ENCODE measurements at regions of chr2 and their contacts with region 1.

Region 1: GRCh38 chr2:208175069-208175839 is 11.9 kb upstream of the CRYGA start:
- DNase-seq: peak; percentile 7 to 59 (median 45)
- ATAC-seq: peak; percentile 93
- H3K4me3 ChIP-seq: no peak overlapping the region
- H3K4me3 Mint-ChIP-seq: no peak overlapping the region
- H3K27ac ChIP-seq: no peak overlapping the region
- H3K27ac Mint-ChIP-seq: no peak overlapping the region
- H3K4me1 ChIP-seq: no peaks in the 10 kb centered on the region
- H3K4me1 Mint-ChIP-seq: peaks cover 0 to 6% (median 4%) of the 10 kb centered on the region in 7 donors
- H3K27me3 ChIP-seq: no peaks in the 10 kb centered on the region
- H3K27me3 Mint-ChIP-seq: peaks cover 2 to 20% (median 11%) of the 10 kb centered on the region in 5 donors

Region 2: DNA sequence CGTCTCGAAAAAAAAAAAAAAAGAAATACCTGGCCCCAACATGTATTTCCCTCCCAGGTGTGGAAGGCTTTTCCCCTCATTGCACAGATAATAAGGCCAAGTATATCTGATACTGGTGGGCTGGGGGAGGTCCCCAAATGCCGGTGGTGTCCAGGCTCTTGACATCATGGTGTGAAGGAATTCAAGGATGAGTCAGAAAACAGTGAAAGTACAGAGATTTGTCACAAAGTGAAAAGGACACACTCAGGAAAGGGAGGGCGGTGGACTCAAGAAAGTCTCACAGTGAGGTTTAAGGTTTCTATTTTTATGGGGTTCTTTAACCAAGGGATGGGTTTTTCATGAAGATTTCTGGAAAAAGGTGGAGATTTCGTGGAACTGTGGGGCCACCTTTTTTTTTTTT is 367.7 kb before region 1 on chr2:
- CTCF ChIA-PET with region 1: no interaction called
- POLR2A ChIA-PET with region 1: no interaction called
- intact Hi-C with region 1: no loop called
- DNase-seq: no peak
- ATAC-seq: no peak
- H3K4me3 ChIP-seq: no peak overlapping the region
- H3K4me3 Mint-ChIP-seq: no peak overlapping the region
- H3K27ac ChIP-seq: no peak overlapping the region
- H3K27ac Mint-ChIP-seq: no peak overlapping the region
- H3K4me1 ChIP-seq: no peaks in the 10 kb centered on the region
- H3K4me1 Mint-ChIP-seq: peaks cover 0 to 5% (median 0%) of the 10 kb centered on the region in 7 donors
- H3K27me3 ChIP-seq: no peaks in the 10 kb centered on the region
- H3K27me3 Mint-ChIP-seq: peaks cover 0 to 5% (median 0%) of the 10 kb centered on the region in 5 donors

Region 3: GRCh38 chr2:208359632-208359986 is 184.4 kb after region 1 on chr2:
- CTCF ChIA-PET with region 1: no interaction called
- POLR2A ChIA-PET with region 1: no interaction called
- intact Hi-C with region 1: loop called in 1 of 2 experiments (anchors 10 kb)
- DNase-seq: peak in 2 of 9 donors; percentile 3 to 8
- ATAC-seq: peak; percentile 83
- H3K4me3 ChIP-seq: no peak overlapping the region
- H3K4me3 Mint-ChIP-seq: peak overlapping the region in 2 of 10 donors; percentile 38 to 54
- H3K27ac ChIP-seq: no peak overlapping the region
- H3K27ac Mint-ChIP-seq: peak overlapping the region in 2 of 9 donors; percentile 39 to 41
- H3K4me1 ChIP-seq: peaks cover 0 to 4% of the 10 kb centered on the region in 2 donors
- H3K4me1 Mint-ChIP-seq: peaks cover 0 to 8% (median 0%) of the 10 kb centered on the region in 7 donors
- H3K27me3 ChIP-seq: no peaks in the 10 kb centered on the region
- H3K27me3 Mint-ChIP-seq: no peaks in the 10 kb centered on the region

Measured in naive thymus-derived CD4-positive, alpha-beta T cell (primary cell).